ENCODE measurements at regions of chr1 and their contacts with region 1.

Region 1: GRCh38 chr1:91791103-91791502 is 94.8 kb downstream of the TGFBR3 start:
- DNase-seq: peak in 1 of 10 donors; percentile 13
- ATAC-seq: peak; percentile 25 to 56
- H3K4me3 Mint-ChIP-seq: peak overlapping the region in 8 of 10 donors; percentile 23 to 70 (median 49)
- H3K27ac Mint-ChIP-seq: peak overlapping the region in 9 of 10 donors; percentile 9 to 88 (median 75)
- H3K4me1 Mint-ChIP-seq: peaks cover 16 to 43% (median 37%) of the 10 kb centered on the region in 4 donors
- H3K27me3 Mint-ChIP-seq: no peaks in the 10 kb centered on the region

Region 2: DNA sequence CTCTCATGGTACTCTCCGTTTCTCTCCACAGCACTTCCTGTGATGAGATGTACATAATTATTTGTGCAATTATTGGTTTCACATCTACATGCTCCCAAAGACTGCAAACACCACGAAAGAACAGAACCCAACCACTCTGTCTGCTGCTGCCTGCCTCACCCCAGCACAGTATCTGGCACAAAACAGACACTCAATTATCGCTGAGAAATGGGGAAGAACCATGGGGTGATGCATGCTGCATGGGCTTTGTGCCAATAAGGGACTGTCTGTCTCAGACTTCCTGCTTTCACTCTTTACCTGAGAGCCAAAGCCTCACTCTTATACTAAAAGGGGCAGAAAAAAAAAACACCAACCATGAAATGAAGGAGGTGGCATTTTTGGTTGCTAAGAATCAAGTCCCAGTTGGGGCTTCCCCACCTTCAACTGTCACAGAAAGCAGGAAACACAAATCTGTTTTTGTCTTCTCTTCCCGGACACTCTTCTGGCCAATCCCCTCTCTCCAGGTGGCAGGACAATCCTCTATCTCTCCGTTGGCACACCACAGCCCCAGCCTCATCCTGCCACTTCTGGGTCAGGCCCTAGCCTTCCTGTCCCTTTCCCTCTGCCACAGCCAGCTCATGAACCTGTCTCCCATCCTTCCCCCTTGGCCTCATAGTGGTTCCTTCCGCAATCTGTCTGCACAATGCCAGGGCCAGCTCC is 12.9 kb after region 1 on chr1:
- POLR2A ChIA-PET with region 1: interaction called, 11 read pairs
- DNase-seq: peak; percentile 38 to 93 (median 83)
- ATAC-seq: peak; percentile 61 to 72
- H3K4me3 Mint-ChIP-seq: peak overlapping the region; percentile 64 to 90 (median 80)
- H3K27ac Mint-ChIP-seq: peak overlapping the region; percentile 91 to 100 (median 100)
- H3K4me1 Mint-ChIP-seq: peaks cover 34 to 78% (median 54%) of the 10 kb centered on the region in 4 donors
- H3K27me3 Mint-ChIP-seq: no peaks in the 10 kb centered on the region

Region 3: DNA sequence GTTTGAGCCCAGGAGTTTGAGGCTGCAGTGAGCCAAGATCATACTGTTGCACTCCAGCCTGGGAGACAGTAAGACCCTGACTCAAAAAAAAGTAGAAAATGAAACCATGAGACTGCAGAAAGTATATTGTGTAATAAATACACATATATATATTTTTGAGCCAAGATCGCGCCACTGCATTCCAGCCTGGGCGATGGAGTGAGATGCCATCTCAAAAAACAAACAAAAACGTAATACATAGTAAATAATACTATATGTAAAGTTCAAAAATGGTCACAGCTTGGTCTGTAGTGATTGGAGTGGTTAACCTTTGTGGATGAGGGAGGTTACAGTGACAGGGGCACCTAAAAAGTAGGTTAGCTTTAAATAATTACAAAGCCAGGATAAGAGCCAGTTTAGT is 167.9 kb after region 1 on chr1:
- POLR2A ChIA-PET with region 1: no interaction called
- DNase-seq: no peak
- ATAC-seq: no peak
- H3K4me3 Mint-ChIP-seq: no peak overlapping the region
- H3K27ac Mint-ChIP-seq: no peak overlapping the region
- H3K4me1 Mint-ChIP-seq: no peaks in the 10 kb centered on the region
- H3K27me3 Mint-ChIP-seq: peaks cover 0 to 3% (median 1%) of the 10 kb centered on the region in 5 donors

Measured in naive thymus-derived CD8-positive, alpha-beta T cell (primary cell).